ENCODE measurements at regions of chr19 and their contacts with region 1.

Region 1: GRCh38 chr19:48954595-48955310 is at the start of gene BAX:
- DNase-seq: peak; percentile 99
- H3K4me3 ChIP-seq: peak within 1 kb of the TSS; percentile 70
- H3K4me3 Mint-ChIP-seq: peak within 1 kb of the TSS; percentile 85
- H3K27ac Mint-ChIP-seq: peak within 1 kb of the TSS; percentile 91
- H3K4me1 ChIP-seq: peaks cover 8% of the 10 kb centered on the region
- H3K4me1 Mint-ChIP-seq: peaks cover 6% of the 10 kb centered on the region
- H3K27me3 ChIP-seq: no peaks in the 10 kb centered on the region
- H3K27me3 Mint-ChIP-seq: no peaks in the 10 kb centered on the region
- CTCF ChIP-seq: peak in 1 of 2 experiments; percentile 14
- total RNA-seq, gene BAX: 107 and 110 TPM in 2 replicates

Region 2: GRCh38 chr19:48965040-48965805 is 10.5 kb after region 1 on chr19 and contains the start of gene FTL:
- CTCF ChIA-PET with region 1: no interaction called
- POLR2A ChIA-PET with region 1: interaction called, 12 read pairs
- intact Hi-C with region 1: no loop called
- DNase-seq: peak; percentile 99
- H3K4me3 ChIP-seq: peak within 1 kb of the TSS; percentile 95
- H3K4me3 Mint-ChIP-seq: peak within 1 kb of the TSS; percentile 96
- H3K27ac Mint-ChIP-seq: peak within 1 kb of the TSS; percentile 96
- H3K4me1 ChIP-seq: peaks cover 31% of the 10 kb centered on the region
- H3K4me1 Mint-ChIP-seq: peaks cover 40% of the 10 kb centered on the region
- H3K27me3 ChIP-seq: no peaks in the 10 kb centered on the region
- H3K27me3 Mint-ChIP-seq: no peaks in the 10 kb centered on the region
- CTCF ChIP-seq: no peak
- total RNA-seq, gene FTL: 2,542 and 2,963 TPM in 2 replicates

Region 3: GRCh38 chr19:48975947-48976847 is 21.4 kb after region 1 on chr19:
- CTCF ChIA-PET with region 1: interaction called, 10 read pairs
- POLR2A ChIA-PET with region 1: interaction called, 5 read pairs
- intact Hi-C with region 1: no loop called
- DNase-seq: peak; percentile 59 to 61
- H3K4me3 ChIP-seq: no peak overlapping the region
- H3K4me3 Mint-ChIP-seq: no peak overlapping the region
- H3K27ac Mint-ChIP-seq: no peak overlapping the region
- H3K4me1 ChIP-seq: no peaks in the 10 kb centered on the region
- H3K4me1 Mint-ChIP-seq: no peaks in the 10 kb centered on the region
- H3K27me3 ChIP-seq: no peaks in the 10 kb centered on the region
- H3K27me3 Mint-ChIP-seq: no peaks in the 10 kb centered on the region
- CTCF ChIP-seq: peak in 1 of 2 experiments; percentile 39

Measured in Caco-2 (cell line).